ENCODE measurements at regions of chr3 and their contacts with region 1.

Region 1: DNA sequence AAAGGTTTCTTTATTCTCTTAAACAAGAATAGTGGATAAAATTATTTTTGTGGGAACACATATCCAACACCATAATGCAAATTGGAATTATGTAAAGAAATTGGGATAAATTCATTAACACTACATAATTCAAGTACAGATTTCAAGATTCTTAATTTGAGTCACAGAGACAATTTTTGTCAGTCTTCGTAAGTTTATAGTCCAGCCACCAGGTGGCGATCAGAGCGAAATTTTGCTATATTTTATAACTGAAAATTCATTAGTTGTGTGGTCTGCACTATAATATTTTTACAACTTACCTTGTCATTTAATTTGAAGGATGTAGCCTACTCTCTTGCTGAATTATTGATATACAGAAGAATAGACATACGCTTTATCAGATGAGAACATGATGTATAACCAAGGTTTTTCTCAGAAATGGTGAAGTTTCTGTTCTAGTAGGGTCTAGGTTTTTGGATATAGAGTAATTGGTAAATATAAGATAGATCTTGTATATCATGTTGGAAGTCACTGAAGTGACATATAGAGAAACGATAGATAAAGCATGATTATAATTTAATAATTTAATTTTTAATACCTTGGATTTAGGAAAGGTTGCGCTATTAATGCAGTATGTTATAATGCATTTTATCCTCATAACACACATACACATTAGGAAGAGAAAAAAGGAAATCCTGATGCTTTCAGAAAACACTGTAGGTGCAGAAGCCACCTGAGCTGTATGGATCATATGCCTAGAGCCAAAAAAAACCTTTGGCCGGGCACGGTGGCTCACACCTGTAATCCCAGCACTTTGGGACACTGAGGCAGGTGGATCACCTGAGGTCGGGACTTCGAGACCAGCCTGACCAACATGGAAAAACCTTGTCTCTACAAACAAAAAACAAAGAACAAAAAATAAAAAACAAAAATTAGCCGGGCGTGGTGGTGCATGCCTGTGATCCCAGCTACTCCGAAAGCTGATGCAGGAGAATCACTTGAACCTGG is 31.7 kb downstream of the PLSCR4 start:
- DNase-seq: no peak
- ATAC-seq: no peak
- H3K4me3 ChIP-seq: no peak overlapping the region
- H3K27ac ChIP-seq: no peak overlapping the region
- H3K4me1 ChIP-seq: peaks cover 18% of the 10 kb centered on the region
- H3K27me3 ChIP-seq: no peaks in the 10 kb centered on the region
- CTCF ChIP-seq: peak; percentile 69

Region 2: DNA sequence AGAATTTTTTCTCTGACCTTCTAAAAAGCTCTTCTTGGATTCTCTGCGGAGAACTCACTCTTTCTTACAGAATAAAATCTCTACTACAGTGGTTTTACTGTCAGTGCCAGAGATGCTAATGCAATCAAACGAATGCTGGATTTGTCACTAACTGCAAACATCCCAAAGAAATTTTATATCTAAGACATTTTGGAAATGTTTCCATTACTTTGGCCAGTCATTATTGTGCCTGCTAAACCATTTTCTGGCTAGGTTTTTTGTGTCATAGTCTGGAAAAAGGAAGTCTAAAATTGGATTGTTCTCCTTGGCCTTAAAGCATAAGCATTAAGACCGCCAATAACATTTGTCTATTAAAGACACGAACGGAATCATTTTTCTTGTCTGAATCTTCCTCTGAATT is 112.2 kb before region 1 on chr3:
- intact Hi-C with region 1: no loop called
- DNase-seq: no peak
- ATAC-seq: no peak
- H3K4me3 ChIP-seq: no peak overlapping the region
- H3K27ac ChIP-seq: no peak overlapping the region
- H3K4me1 ChIP-seq: no peaks in the 10 kb centered on the region
- H3K27me3 ChIP-seq: no peaks in the 10 kb centered on the region
- CTCF ChIP-seq: no peak

Region 3: DNA sequence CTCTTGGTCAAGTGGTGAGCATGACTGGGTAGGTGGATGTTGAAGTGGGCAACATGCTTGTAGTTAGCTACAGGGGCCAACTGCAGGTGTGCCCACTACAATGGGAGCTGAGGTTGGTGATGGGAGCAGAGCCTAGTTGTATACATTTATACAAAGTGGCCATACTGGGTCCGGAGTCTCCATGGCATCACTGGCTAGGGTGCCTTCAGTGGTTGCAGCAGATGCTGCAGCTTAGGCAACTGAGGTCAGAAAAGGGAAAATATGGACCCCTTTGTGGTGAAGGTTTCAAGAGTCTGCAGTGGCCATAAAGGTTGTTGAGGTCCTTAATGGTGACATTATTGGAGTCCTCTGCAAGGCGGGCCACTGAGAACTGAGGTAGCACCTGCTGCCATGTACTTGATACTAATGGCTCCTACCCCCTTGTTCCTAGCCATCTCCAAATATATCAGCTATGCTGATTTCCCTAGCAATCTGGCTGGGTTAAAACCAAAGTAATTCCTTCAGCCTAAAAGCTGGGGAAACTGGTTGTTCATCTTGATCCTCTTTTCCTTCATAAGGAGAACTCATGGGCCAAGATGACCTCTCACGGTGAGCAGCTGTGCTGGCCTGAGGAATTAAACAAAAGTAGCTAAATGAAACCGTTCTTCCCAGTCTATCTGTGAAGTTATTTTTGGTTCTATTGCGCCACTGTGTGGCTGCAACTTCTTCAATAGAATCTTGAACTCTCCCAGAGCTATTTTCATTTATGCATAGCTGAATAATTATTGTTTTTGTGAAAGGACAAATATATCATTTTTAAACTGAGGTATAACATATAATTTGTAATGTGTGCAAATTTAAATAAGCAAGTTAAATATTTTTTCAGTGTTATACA is 107.7 kb after region 1 on chr3:
- intact Hi-C with region 1: loop called (anchors 10 kb)
- DNase-seq: no peak
- ATAC-seq: peak; percentile 45 to 76
- H3K4me3 ChIP-seq: no peak overlapping the region
- H3K27ac ChIP-seq: no peak overlapping the region
- H3K4me1 ChIP-seq: no peaks in the 10 kb centered on the region
- H3K27me3 ChIP-seq: no peaks in the 10 kb centered on the region
- CTCF ChIP-seq: peak; percentile 58

Region 4: DNA sequence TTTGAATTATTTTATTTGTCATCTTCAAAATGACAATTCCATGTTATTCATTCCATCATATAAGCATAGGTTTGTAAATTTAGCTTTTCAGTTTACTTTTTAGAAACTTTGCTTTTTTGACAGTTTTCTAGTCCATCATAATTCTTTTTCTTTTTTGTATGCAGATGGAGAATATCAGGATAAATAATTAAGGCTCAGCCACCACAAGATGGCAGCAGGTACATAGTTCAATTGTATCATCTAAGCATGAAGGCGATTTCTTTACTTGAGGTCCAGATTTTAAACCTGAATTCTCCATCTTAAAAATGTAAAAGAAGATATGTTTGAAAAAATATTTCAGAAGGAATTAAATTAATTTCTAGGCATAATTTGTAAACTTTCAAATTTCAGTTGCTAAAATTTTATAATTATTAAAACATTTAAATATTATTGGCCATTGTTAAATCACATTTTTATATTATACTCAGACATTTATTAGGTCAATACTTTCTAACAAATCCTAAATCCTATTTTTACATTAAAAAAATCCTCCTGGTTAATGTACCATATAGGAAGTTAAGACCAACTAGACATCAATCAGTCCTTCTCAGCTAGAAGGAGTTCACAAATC is 370.8 kb after region 1 on chr3:
- intact Hi-C with region 1: loop called (anchors 10 kb)
- DNase-seq: no peak
- ATAC-seq: no peak
- H3K4me3 ChIP-seq: no peak overlapping the region
- H3K27ac ChIP-seq: no peak overlapping the region
- H3K4me1 ChIP-seq: no peaks in the 10 kb centered on the region
- H3K27me3 ChIP-seq: no peaks in the 10 kb centered on the region
- CTCF ChIP-seq: peak; percentile 57

Measured in lower lobe of right lung (tissue), 2 donors.